GM10248 (cell line): ENCODE measurements at regions of chr12 and their contacts with region 1.

Region 1: DNA sequence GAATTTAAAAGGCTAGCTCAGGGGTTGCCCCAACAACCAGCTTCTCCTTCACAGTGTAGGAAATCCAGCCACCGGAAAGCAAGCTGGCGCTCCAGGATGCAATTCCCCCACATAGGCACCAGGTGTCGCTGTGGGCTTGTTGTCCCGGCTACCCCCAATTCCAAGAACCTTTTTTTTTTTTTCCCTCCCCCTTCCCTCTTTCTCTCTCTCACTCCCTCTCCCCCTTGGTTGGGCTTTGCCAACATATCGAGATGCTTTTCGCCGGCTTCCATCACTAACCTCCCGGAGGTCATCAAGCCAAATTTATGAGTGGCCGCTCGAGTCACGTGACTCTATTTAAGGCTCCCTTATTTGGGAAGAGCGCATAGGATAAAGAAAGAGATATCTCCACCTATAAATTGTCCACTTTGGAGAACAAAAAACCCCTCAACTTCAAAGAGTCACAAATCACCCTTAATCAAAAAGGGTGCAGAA is at the start of gene HOXC5:
- DNase-seq: peak; percentile 86
- CTCF ChIP-seq: peak; percentile 93

Region 2: DNA sequence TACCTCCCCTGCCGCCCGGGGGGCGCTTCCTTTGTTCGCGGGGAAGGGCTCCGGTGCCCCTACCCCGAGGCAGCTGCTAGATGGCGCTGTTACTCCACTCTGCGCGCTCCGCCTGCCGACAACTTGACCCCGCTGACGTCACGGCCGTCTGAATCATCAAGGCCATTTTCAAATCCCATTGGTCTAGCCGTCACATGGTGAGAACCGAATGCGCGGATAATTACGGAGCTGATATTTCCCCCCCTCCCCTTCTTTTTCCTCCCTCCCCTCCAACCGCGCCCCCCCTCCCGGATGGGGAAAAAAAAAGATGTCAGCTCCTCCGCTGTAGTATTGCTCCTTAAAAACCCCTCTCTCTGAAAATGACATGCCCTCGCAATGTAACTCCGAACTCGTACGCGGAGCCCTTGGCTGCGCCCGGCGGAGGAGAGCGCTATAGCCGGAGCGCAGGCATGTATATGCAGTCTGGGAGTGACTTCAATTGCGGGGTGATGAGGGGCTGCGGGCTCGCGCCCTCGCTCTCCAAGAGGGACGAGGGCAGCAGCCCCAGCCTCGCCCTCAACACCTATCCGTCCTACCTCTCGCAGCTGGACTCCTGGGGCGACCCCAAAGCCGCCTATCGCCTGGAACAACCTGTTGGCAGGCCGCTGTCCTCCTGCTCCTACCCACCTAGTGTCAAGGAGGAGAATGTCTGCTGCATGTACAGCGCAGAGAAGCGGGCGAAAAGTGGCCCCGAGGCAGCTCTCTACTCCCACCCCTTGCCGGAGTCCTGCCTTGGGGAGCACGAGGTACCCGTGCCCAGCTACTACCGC is 47.6 kb before region 1 on chr12 and contains the start of gene HOXC10:
- CTCF ChIA-PET with region 1: interaction called, 16 read pairs
- POLR2A ChIA-PET with region 1: no interaction called
- DNase-seq: peak; percentile 87
- CTCF ChIP-seq: peak; percentile 71

Region 3: DNA sequence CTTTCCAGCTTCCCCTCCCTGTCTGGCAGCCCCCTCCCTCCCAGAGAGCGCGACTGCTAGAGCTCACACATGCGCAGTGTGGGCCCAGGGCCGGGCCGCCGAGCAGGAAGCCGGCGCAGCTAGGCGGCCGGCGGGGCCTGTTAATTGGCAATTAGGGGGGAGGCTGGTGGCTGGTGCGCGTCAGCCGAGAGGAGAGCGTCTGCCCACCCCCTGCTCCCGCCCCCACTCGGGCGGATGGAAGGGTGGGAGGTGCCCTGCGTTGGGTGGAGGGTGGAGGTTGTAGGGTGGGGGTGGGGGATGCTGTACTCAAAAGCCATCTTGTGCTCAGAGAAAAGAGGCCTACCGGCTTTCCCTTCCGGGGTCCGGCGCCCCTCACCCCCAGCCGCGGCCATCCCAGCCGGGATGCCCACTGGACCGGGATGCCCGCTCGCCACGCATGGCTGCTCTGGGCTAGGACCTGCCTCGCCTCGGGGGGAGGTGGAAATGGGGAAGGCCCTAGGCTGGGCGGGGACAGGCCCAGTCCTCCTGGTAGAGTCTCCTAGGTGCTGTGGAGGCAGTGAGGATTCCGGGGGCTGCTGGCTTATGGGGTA is 14.7 kb before region 1 on chr12:
- CTCF ChIA-PET with region 1: interaction called, 56 read pairs
- POLR2A ChIA-PET with region 1: no interaction called
- DNase-seq: peak; percentile 94
- CTCF ChIP-seq: no peak

Region 4: GRCh38 chr12:54136827-54137580 is 104.3 kb after region 1 on chr12:
- CTCF ChIA-PET with region 1: interaction called, 12 read pairs
- POLR2A ChIA-PET with region 1: no interaction called
- DNase-seq: no peak
- CTCF ChIP-seq: no peak

Region 5: DNA sequence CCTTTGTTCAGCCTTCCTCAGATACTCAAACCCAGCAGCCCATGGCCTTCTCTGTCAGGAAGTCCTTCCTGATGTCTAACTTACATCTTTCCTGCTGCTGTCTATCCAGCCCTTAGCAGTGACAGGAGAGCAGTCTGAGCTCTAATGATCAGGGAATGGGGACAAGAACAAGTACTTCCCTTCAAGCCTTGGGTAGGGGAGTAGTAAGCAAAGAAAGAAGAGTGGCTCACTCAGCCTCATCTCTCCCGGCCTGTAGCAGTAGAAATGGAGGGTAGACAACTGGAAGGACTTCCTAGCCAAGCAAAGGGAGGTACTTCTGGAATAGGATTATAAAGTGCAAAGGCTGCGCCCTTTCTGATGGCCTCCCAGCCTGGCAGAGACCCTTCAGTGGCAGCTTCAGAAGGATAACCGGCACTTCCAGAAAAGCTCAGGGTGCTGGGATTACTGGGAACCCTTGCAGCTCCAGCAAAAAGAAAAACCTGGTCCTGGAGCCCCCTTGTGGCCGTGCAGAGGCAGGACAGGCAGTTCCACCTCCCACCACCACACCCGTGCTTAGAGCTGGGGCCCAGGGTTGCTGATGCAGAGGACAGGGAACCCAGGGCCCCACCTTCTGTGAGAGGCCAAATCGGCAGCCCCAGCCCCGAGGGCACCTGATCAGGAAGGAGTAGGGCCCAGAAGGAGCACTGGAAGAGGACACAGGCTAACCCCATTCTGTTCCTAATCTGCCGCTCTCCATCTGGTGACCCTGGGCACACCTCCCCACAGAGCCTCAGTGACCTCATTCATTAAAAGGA is 168.5 kb after region 1 on chr12:
- CTCF ChIA-PET with region 1: interaction called, 214 read pairs
- POLR2A ChIA-PET with region 1: no interaction called
- DNase-seq: peak; percentile 83
- CTCF ChIP-seq: peak; percentile 78